AG04450 (cell line): ENCODE measurements at regions of chr1 and their contacts with region 1.

Region 1: DNA sequence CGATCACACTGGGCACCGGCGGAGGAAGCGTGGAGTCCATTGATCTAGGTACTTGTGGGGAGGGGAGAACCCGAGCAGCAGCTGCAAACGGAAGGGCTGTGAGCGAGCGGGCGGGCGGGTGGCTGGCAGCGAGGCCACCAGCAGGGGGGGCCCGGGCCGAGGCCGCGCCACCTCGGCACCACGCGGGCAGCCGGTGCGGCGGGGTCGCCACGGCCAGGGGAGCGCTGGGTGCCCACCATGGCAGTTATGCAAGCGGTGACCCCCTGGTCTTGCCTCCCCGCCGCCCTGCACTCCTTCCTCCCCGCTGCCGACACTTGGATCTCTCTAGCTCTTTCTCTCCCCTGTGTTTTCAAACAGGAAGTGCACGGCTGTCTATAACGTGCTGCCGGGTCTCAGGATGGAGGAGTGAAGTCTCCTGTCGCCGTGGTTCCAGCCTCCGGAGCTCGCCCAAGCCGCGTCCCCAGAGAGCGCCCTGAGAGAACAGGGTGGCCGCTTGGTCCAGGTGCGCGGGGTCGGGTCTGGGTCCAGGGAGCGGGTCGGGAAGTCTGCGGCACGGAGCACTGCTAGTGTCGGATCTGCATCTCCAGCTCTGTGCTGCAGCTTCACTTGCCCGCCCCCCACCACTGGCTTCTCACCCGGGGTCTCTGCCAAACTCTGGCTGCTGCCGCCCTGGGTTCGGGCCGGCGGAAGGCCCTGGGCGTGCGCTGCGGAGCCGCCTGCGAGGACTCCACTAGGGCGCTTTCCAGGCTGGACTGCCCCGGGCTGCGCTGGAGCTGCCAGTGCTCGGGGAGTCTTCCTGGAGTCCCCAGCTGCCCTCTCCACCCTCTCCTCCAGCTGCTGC is 22.7 kb downstream of the LRRC8D start:
- DNase-seq: no peak
- H3K4me3 ChIP-seq: peak overlapping the region; percentile 80
- H3K27ac ChIP-seq: peak overlapping the region; percentile 66
- H3K27me3 ChIP-seq: no peaks in the 10 kb centered on the region
- CTCF ChIP-seq: peak; percentile 33

Region 2: DNA sequence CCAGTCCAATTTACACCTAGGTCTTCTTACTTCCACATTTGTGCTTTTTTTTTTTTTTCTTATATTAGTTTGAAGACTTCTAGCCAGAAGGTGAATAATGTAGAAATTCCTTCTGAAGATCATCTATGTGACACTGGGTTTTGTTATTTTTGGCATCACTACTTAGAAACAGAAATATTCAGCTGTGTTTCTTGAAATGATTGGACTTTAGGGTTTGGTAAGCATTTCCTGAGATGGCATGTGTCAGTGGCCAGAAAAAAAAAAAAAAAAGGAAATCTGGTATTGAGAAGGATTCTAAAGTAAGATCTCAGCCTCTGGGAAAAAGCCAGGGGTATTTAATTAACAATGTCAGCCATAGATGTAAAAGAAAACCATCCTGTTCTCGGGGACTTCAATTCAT is 254.0 kb before region 1 on chr1:
- CTCF ChIA-PET with region 1: no interaction called
- POLR2A ChIA-PET with region 1: no interaction called
- DNase-seq: no peak
- H3K4me3 ChIP-seq: no peak overlapping the region
- H3K27ac ChIP-seq: no peak overlapping the region
- H3K27me3 ChIP-seq: no peaks in the 10 kb centered on the region
- CTCF ChIP-seq: no peak

Region 3: GRCh38 chr1:89855413-89856123 is 12.1 kb after region 1 on chr1:
- CTCF ChIA-PET with region 1: interaction called, 14 read pairs
- POLR2A ChIA-PET with region 1: interaction called, 5 read pairs
- DNase-seq: no peak
- H3K4me3 ChIP-seq: 0 out of 2 replicates have a peak overlapping the region, but pooled peaks have one; percentile 3
- H3K27ac ChIP-seq: no peak overlapping the region
- H3K27me3 ChIP-seq: no peaks in the 10 kb centered on the region
- CTCF ChIP-seq: no peak

Region 4: GRCh38 chr1:89919174-89919573 is 75.7 kb after region 1 on chr1:
- CTCF ChIA-PET with region 1: interaction called, 12 read pairs
- POLR2A ChIA-PET with region 1: no interaction called
- DNase-seq: no peak
- H3K4me3 ChIP-seq: no peak overlapping the region
- H3K27ac ChIP-seq: no peak overlapping the region
- H3K27me3 ChIP-seq: no peaks in the 10 kb centered on the region
- CTCF ChIP-seq: no peak